ENCODE measurements at regions of chr14 and their contacts with region 1.

Region 1: DNA sequence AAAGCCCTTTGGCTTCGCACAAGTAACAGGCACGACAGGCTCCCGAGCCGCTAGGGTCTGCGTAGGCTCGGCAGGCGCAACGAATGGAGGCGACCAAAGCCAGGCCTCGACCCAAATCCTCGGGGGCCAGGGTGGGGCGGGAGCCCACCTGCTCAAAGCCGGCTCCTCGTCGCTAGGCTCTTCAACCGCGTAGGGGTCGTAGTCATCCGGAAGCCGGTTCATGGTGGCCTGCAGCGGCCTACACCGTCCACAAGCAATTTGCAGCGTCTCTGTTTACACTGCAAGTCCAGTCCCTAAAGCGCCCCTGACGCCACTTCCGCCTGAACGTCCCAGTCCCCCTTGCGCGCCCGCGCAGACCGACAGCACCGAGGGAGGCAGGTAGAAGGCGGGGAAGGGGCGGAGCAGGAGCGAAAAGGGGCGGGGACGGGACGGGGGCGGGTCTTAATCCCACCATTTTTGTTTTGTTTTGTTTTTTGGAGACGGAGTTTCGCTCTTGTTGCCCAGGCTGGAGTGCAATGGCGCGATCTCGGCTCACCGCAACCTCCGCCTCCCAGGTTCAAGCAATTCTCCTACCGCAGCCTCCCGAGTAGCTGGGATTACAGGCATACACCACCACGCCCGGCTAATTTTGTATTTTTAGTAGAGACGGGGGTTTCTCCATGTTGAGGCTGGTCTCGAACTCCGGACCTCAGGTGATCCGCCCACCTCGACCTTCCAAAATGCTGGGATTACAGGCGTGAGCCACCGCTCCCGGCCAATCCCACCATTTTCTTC is at the start of gene EAPP:
- DNase-seq: peak; percentile 89 to 96 (median 92)
- ATAC-seq: peak; percentile 97
- H3K4me3 ChIP-seq: peak within 1 kb of the TSS; percentile 90
- H3K27ac ChIP-seq: peak within 1 kb of the TSS; percentile 93
- H3K4me1 ChIP-seq: peaks cover 0 to 7% of the 10 kb centered on the region in 2 experiments; a peak in 2 of 5 replicates
- H3K27me3 ChIP-seq: no peaks in the 10 kb centered on the region
- CTCF ChIP-seq: no peak
- EP300 ChIP-seq: peak; percentile 5; the same call in 1 of the 2 replicates
- POLR2A ChIP-seq: peak; percentile 85
- RAD21 ChIP-seq: no peak
- polyA plus RNA-seq, gene EAPP: 64.1 to 67.6 TPM

Region 2: DNA sequence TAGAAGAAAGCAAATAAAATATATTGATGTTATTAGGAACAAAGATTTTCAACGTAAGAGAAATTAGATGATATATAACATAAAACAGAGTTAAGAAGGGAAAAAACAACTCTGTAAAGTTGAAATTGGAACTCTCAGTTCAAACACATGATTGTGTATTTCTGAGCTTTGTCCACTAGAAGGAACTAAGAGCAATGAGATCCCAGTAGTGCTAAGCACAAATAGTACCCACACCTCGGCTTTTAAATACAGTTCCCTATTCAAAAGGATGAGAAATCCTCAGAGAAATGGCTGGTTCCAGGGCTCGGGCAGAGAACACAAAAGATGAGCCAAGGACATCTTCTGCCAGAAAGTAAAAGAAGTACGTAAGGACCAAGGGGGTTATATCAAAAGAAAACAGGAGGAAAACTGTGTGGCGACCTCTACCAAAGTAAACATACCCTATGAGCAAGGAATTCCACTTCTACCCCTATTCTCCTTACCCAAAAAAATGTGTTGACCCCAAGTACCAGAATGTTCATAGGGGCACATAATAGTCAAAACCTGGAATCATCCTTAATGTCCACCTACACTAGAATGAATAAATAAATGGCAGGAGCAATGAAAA is 174.2 kb before region 1 on chr14:
- CTCF ChIA-PET with region 1: no interaction called
- POLR2A ChIA-PET with region 1: interaction called, 3 read pairs
- in situ Hi-C with region 1: no loop called
- intact Hi-C with region 1: loop called (anchors 5 kb)
- DNase-seq: no peak
- ATAC-seq: peak; percentile 66; the same call in 2 of the 3 replicates
- H3K4me3 ChIP-seq: no peak overlapping the region
- H3K27ac ChIP-seq: no peak overlapping the region
- H3K4me1 ChIP-seq: no peaks in the 10 kb centered on the region; a peak in 2 of 5 replicates
- H3K27me3 ChIP-seq: peaks cover 0 to 7% of the 10 kb centered on the region in 2 experiments; a peak in 4 of 5 replicates
- CTCF ChIP-seq: peak in 2 of 3 experiments; percentile 14 to 20; a peak in 2 of 6 replicates
- EP300 ChIP-seq: no peak
- POLR2A ChIP-seq: no peak
- RAD21 ChIP-seq: peak in 1 of 2 experiments; percentile 26; a peak in 2 of 4 replicates

Region 3: GRCh38 chr14:34461334-34462131 is 78.1 kb before region 1 on chr14:
- CTCF ChIA-PET with region 1: no interaction called
- POLR2A ChIA-PET with region 1: no interaction called
- in situ Hi-C with region 1: no loop called
- intact Hi-C with region 1: loop called (anchors 5 kb)
- DNase-seq: peak; percentile 35 to 72 (median 60)
- ATAC-seq: peak; percentile 67
- H3K4me3 ChIP-seq: peak overlapping the region; percentile 84
- H3K27ac ChIP-seq: peak overlapping the region; percentile 81
- H3K4me1 ChIP-seq: peaks cover 12 to 32% of the 10 kb centered on the region in 2 experiments
- H3K27me3 ChIP-seq: no peaks in the 10 kb centered on the region
- CTCF ChIP-seq: no peak
- EP300 ChIP-seq: no peak
- POLR2A ChIP-seq: no peak
- RAD21 ChIP-seq: no peak

Region 4: DNA sequence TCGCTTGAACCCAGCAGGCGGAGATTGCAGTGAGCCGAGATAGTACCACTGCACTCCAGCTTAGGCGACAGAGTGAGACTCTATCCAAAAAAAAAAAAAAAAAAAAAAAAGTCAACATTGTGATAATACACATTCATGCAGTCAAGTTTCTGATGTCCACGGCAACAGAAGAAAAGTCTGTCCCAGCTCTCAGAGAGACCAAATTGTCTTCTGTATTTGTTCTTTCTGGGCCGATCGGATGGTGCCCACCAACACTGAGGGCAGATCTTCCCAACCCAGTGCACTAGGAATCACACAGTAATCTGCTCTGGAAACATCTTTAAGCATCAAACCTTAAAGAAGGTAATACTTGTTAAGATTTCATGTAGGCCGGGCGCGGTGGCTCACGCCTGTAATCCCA is 31.7 kb before region 1 on chr14:
- CTCF ChIA-PET with region 1: no interaction called
- POLR2A ChIA-PET with region 1: no interaction called
- in situ Hi-C with region 1: no loop called
- intact Hi-C with region 1: no loop called
- DNase-seq: no peak
- ATAC-seq: no peak
- H3K4me3 ChIP-seq: no peak overlapping the region
- H3K27ac ChIP-seq: no peak overlapping the region
- H3K4me1 ChIP-seq: peaks cover 0 to 5% of the 10 kb centered on the region in 2 experiments; a peak in 3 of 5 replicates
- H3K27me3 ChIP-seq: no peaks in the 10 kb centered on the region
- CTCF ChIP-seq: no peak
- EP300 ChIP-seq: no peak
- POLR2A ChIP-seq: no peak
- RAD21 ChIP-seq: no peak